ENCODE measurements at regions of chr4 and their contacts with region 1.

Region 1: DNA sequence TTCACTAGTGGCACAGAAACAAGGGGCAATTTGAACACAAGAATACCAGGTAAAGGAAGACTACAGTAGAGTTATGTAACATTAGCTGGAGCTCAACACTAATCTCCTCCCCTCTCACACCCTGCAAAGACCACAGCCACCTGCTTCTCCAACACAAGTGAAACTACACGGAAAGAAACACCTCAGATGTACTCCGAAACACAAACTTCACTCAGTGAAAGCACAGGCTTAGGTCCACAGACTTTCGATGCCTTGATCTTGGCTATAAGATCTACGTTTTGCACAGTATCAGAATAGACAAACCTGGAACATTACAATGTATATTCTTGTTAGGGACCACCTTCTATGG is 7.6 kb downstream of the ACSL1 start:
- DNase-seq: no peak
- H3K4me3 ChIP-seq: peak overlapping the region in 1 of 7 experiments; percentile 19
- H3K27ac ChIP-seq: no peak overlapping the region
- H3K4me1 ChIP-seq: peaks cover 17 to 50% (median 36%) of the 10 kb centered on the region in 4 experiments
- H3K27me3 ChIP-seq: no peaks in the 10 kb centered on the region

Region 2: DNA sequence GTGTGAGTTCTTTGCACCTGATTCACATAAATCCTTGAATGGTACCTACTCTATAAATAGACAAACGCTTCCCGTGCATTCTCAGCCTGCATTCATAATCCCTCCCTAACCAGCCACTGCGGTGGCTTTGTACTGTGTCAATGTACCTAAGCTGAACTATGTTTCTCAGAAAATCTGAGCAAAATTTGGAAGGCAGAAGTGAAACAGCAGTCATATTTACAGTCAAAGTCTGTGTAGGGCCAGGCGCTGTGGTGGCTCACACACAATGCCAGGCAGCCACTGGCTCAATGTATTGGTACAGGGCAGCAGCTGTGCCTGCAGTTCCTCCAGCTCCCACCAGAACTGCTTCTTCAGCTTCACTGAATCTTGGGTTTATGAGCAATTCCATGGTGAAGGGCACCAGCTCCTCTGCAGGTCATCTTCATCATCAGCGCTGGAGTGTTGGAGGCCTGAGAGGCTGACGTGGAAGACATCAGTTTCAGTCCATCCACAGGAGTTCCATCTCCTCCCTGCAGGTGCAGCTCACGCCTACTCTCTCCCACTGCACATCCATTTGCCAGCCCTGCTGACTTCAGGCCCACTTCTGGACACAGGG is 311.6 kb before region 1 on chr4:
- CTCF ChIA-PET with region 1: no interaction called
- POLR2A ChIA-PET with region 1: no interaction called
- DNase-seq: peak; percentile 52 to 75 (median 68)
- H3K4me3 ChIP-seq: no peak overlapping the region
- H3K27ac ChIP-seq: no peak overlapping the region
- H3K4me1 ChIP-seq: peaks cover 2 to 21% (median 17%) of the 10 kb centered on the region in 4 experiments
- H3K27me3 ChIP-seq: no peaks in the 10 kb centered on the region

Region 3: GRCh38 chr4:184745831-184746795 is 72.1 kb before region 1 on chr4:
- CTCF ChIA-PET with region 1: interaction called, 32 read pairs
- POLR2A ChIA-PET with region 1: interaction called, 3 read pairs
- DNase-seq: peak; percentile 87 to 94 (median 93)
- H3K4me3 ChIP-seq: peak overlapping the region in 5 of 7 experiments; percentile 8 to 52 (median 19)
- H3K27ac ChIP-seq: peak overlapping the region; percentile 20 to 67
- H3K4me1 ChIP-seq: peaks cover 19 to 34% (median 27%) of the 10 kb centered on the region in 4 experiments
- H3K27me3 ChIP-seq: no peaks in the 10 kb centered on the region

Region 4: DNA sequence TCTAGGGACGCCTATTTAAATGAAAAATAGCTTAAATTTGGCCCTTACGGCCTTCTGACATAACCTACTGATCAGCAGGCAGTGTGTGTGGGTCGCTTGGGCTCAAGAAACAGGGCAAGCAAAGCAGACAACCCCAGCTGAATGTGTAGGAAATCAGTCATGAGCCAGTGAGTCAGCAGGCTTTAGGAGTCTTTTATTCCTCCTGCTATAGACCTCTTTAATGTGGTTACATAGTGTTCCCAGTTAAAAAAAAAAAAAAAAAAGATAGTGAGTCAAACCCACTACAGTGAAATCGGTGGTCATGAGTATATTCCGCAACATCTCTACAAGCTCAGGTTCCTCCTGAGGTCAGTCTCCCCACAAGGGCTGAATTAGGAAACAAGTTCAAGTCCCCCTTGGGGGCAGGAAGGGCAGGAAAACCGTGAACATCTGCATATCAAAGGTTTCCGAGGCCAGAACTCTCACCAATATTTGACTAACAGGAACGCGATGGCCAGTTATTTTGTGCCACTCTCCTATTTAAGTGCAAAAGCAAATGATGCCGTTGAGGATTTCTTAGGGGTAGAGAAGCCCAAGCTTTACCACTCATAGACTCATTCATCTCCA is 25.1 kb before region 1 on chr4:
- CTCF ChIA-PET with region 1: interaction called, 13 read pairs
- POLR2A ChIA-PET with region 1: interaction called, 3 read pairs
- DNase-seq: peak; percentile 87 to 94 (median 91)
- H3K4me3 ChIP-seq: peak overlapping the region in 1 of 7 experiments; percentile 42
- H3K27ac ChIP-seq: peak overlapping the region in 1 of 2 experiments; percentile 17
- H3K4me1 ChIP-seq: peaks cover 21 to 35% (median 32%) of the 10 kb centered on the region in 4 experiments
- H3K27me3 ChIP-seq: no peaks in the 10 kb centered on the region

Measured in common myeloid progenitor, CD34-positive (primary cell).